Activated B cell treated with CpG ODN at 0.5 μM for 24 hours (primary cell): ENCODE measurements at regions of chr12 and their contacts with region 1.

Region 1: GRCh38 chr12:57782608-57783465 is at the start of gene TSFM:
- DNase-seq: peak; percentile 93
- ATAC-seq: peak; percentile 97
- H3K4me3 Mint-ChIP-seq: peak within 1 kb of the TSS; percentile 99
- H3K27ac Mint-ChIP-seq: peak within 1 kb of the TSS; percentile 97
- H3K4me1 Mint-ChIP-seq: peaks cover 22% of the 10 kb centered on the region
- H3K27me3 Mint-ChIP-seq: no peaks in the 10 kb centered on the region
- CTCF ChIP-seq: no peak
- total RNA-seq, gene TSFM: 28.4 and 33.4 TPM in 2 replicates

Region 2: DNA sequence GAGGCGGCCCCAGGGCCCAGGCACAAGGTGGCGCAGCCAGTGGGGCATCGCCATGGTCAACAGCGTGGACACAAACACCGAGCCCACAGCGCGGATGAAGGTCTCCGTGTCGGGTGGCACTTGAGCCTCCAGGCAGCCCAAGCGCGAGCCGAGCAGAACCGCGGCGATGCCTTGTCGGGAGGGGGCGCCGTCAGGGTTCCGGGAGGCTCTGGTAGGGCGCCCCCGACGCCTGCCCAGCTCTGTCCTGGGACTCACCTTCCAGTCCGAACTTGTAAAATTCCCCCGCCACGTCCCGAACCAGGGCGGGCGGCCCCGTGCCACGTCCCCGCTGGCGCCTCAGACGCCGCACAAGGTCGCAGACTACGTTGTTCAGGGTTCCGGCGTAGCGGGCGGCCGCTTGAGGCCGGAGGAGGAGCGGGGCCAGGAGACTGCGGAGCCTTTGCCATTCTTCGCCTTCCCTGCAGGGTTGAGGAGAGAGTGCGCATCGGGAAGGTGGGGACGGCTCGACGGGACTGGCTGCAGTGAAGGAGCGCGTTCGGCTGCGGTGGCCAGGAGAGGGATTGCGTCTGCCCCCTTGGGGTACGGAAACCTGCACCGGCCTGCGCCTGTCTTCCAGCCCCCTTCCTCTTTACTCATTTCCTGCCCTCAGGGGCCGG is 17.7 kb before region 1 on chr12:
- CTCF ChIA-PET with region 1: interaction called, 3 read pairs
- POLR2A ChIA-PET with region 1: interaction called, 3 read pairs
- intact Hi-C with region 1: loop called (anchors 2 kb)
- DNase-seq: peak; percentile 47
- ATAC-seq: peak; percentile 83
- H3K4me3 Mint-ChIP-seq: peak overlapping the region; percentile 89
- H3K27ac Mint-ChIP-seq: no peak overlapping the region
- H3K4me1 Mint-ChIP-seq: peaks cover 32% of the 10 kb centered on the region
- H3K27me3 Mint-ChIP-seq: peaks cover 13% of the 10 kb centered on the region
- CTCF ChIP-seq: no peak

Region 3: GRCh38 chr12:57771708-57772428 is 11.0 kb before region 1 on chr12 and contains the start of gene METTL1:
- CTCF ChIA-PET with region 1: no interaction called
- POLR2A ChIA-PET with region 1: interaction called, 11 read pairs
- intact Hi-C with region 1: loop called (anchors 1 kb)
- DNase-seq: peak; percentile 81
- ATAC-seq: peak; percentile 91
- H3K4me3 Mint-ChIP-seq: peak within 1 kb of the TSS; percentile 98
- H3K27ac Mint-ChIP-seq: peak within 1 kb of the TSS; percentile 98
- H3K4me1 Mint-ChIP-seq: peaks cover 20% of the 10 kb centered on the region
- H3K27me3 Mint-ChIP-seq: peaks cover under 1% of the 10 kb centered on the region
- CTCF ChIP-seq: no peak
- total RNA-seq, gene METTL1: 32.2 and 40.7 TPM in 2 replicates